AG04450 (cell line): ENCODE measurements at regions of chr5 and their contacts with region 1.

Region 1: DNA sequence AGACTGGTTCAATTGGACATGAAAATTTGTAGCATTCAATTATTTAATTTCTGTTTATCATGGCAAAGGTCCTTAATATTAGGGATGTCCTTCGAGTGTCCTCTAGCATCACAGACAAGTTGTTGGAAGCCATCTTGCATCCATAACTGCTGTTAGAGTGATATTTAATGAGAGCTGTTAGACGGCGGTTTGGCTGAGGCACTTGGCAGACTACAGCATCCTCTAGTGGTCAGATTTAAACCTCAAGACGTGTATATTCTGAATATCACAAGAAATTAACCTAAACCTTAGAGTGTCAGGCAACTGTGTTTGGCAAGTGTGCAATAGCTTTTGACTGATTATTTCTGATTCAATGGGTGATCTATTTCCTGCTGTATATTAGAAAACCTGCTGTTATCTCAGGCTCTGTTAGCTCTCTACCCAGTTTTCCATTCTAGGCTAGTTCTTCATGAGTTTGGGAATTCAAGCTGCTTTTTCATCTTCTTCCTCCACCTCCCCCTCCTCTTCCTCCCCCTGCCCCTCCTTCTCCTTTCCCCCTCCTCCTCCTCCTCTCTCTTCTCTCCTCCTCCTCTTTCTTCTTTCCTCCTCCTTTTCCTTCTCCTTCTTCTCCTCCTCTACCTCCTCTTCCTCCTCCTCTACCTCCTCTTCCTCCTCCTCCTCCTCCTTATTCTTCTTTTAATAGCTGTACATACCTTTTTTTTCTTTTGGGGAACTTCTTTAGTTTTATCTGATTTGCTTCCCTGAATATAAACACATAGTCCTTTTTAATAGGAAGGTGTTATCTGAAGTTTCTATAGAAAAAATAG is 8.6 kb downstream of the SPINK1 start:
- DNase-seq: peak; percentile 7
- H3K4me3 ChIP-seq: no peak overlapping the region
- H3K27ac ChIP-seq: no peak overlapping the region
- H3K27me3 ChIP-seq: peaks cover 4% of the 10 kb centered on the region
- CTCF ChIP-seq: peak; percentile 90

Region 2: GRCh38 chr5:147639321-147639720 is 183.6 kb before region 1 on chr5:
- CTCF ChIA-PET with region 1: interaction called, 11 read pairs
- POLR2A ChIA-PET with region 1: no interaction called
- DNase-seq: no peak
- H3K4me3 ChIP-seq: no peak overlapping the region
- H3K27ac ChIP-seq: no peak overlapping the region
- H3K27me3 ChIP-seq: no peaks in the 10 kb centered on the region
- CTCF ChIP-seq: no peak

Region 3: GRCh38 chr5:147673266-147673665 is 149.6 kb before region 1 on chr5:
- CTCF ChIA-PET with region 1: no interaction called
- POLR2A ChIA-PET with region 1: no interaction called
- DNase-seq: no peak
- H3K4me3 ChIP-seq: no peak overlapping the region
- H3K27ac ChIP-seq: no peak overlapping the region
- H3K27me3 ChIP-seq: no peaks in the 10 kb centered on the region
- CTCF ChIP-seq: no peak

Region 4: GRCh38 chr5:147751156-147751825 is 71.6 kb before region 1 on chr5:
- CTCF ChIA-PET with region 1: no interaction called
- POLR2A ChIA-PET with region 1: no interaction called
- DNase-seq: no peak
- H3K4me3 ChIP-seq: no peak overlapping the region
- H3K27ac ChIP-seq: no peak overlapping the region
- H3K27me3 ChIP-seq: no peaks in the 10 kb centered on the region
- CTCF ChIP-seq: no peak